ENCODE measurements at regions of chr6 and their contacts with region 1.

Region 1: DNA sequence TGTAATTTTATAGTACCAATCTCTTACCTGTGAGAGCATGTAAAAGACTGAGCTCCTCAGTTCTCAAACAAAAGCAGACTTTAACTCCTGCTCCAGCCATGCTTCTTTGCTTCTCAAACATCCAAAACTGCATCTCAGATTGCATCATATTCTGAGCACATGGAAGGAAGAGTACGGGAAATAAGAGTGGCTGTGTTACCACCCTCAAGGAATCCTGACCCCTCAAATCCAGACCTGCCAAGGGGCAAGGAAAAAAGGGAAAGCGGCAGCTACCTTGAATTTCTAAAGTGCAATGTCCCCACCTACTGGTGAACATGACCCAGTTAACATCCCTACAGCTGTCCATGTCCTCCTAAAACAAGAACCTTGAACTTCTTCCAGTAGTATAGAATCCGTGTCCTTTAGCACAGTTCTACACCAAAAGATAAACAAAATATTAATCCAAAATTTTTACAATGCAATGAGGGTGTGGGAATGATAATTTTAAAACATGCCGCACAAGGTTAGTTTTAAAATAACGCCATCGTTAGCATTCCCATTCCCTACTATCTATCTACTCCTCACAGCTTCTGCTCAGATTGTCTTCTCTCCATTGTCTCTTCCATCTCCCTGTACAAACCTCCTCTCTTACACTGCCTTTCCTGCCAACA is 34.1 kb upstream of the HLA-DQB1 start:
- DNase-seq: peak in 4 of 5 donors; percentile 66 to 88 (median 82)
- H3K4me3 ChIP-seq: no peak overlapping the region
- H3K27ac ChIP-seq: no peak overlapping the region
- H3K4me1 ChIP-seq: peaks cover 0 to 2% (median 0%) of the 10 kb centered on the region in 3 donors
- H3K27me3 ChIP-seq: no peaks in the 10 kb centered on the region
- CTCF ChIP-seq: peak; percentile 69

Region 2: GRCh38 chr6:31541658-31542521 is 1158.6 kb before region 1 on chr6 and contains the start of gene DDX39B:
- intact Hi-C with region 1: no loop called
- DNase-seq: peak; percentile 96 to 99 (median 98)
- H3K4me3 ChIP-seq: peak within 1 kb of the TSS; percentile 98 to 100 (median 99)
- H3K27ac ChIP-seq: peak within 1 kb of the TSS; percentile 99
- H3K4me1 ChIP-seq: peaks cover 8 to 21% (median 21%) of the 10 kb centered on the region in 3 donors
- H3K27me3 ChIP-seq: no peaks in the 10 kb centered on the region
- CTCF ChIP-seq: no peak
- total RNA-seq, gene DDX39B: 295 TPM

Region 3: GRCh38 chr6:32413427-32414047 is 287.0 kb before region 1 on chr6:
- intact Hi-C with region 1: loop called (anchors 10 kb)
- DNase-seq: peak; percentile 85 to 88 (median 87)
- H3K4me3 ChIP-seq: no peak overlapping the region
- H3K27ac ChIP-seq: no peak overlapping the region
- H3K4me1 ChIP-seq: no peaks in the 10 kb centered on the region
- H3K27me3 ChIP-seq: peaks cover 2% of the 10 kb centered on the region
- CTCF ChIP-seq: peak; percentile 89

Region 4: GRCh38 chr6:32984605-32985389 is 284.3 kb after region 1 on chr6:
- intact Hi-C with region 1: no loop called
- DNase-seq: peak; percentile 90 to 94 (median 92)
- H3K4me3 ChIP-seq: no peak overlapping the region
- H3K27ac ChIP-seq: no peak overlapping the region
- H3K4me1 ChIP-seq: peaks cover 0 to 2% (median 0%) of the 10 kb centered on the region in 3 donors
- H3K27me3 ChIP-seq: no peaks in the 10 kb centered on the region
- CTCF ChIP-seq: peak; percentile 92

Region 5: GRCh38 chr6:33014841-33015634 is 314.5 kb after region 1 on chr6:
- intact Hi-C with region 1: no loop called
- DNase-seq: peak in 4 of 5 donors; percentile 58 to 92 (median 80)
- H3K4me3 ChIP-seq: peak overlapping the region in 1 of 3 donors; percentile 36
- H3K27ac ChIP-seq: no peak overlapping the region
- H3K4me1 ChIP-seq: peaks cover 0 to 17% (median 11%) of the 10 kb centered on the region in 3 donors
- H3K27me3 ChIP-seq: no peaks in the 10 kb centered on the region
- CTCF ChIP-seq: peak; percentile 84

Measured in kidney (tissue), 22 donors.